ENCODE measurements at regions of chr3 and their contacts with region 1.

Region 1: DNA sequence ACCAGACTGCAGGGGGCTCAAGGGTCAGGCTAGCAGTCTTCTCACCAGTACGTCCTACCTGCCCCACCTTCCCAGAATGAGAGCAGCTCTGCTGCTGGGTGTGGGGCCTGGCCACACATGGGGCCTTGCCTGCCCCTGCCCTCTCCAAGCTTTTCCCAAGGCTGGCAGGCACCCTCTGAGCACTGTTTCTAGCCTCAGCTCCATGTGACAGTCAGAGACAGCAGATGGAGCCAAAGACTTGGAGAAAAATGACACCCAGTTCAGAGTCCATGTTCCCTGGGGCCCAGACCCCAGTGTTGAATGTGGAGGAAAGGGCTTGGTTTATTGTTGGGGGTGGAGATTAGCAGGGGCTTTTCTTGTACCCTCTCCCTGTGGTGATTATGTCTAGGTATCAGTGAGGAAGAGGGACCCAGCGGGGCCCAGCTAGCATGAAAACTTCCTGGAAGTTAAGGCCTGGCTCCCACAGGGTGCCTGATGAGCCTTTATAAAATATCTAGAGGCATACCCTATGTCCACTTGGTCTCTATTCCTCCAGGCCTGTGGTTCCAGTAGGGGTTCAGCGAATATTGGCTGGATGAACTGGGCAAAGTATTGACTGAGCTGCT is 153.8 kb downstream of the EEFSEC start:
- DNase-seq: peak; percentile 7
- ATAC-seq: peak; percentile 48
- H3K4me3 ChIP-seq: no peak overlapping the region
- H3K27ac ChIP-seq: no peak overlapping the region
- H3K4me1 ChIP-seq: no peaks in the 10 kb centered on the region
- H3K27me3 ChIP-seq: no peaks in the 10 kb centered on the region
- CTCF ChIP-seq: peak; percentile 37

Region 2: DNA sequence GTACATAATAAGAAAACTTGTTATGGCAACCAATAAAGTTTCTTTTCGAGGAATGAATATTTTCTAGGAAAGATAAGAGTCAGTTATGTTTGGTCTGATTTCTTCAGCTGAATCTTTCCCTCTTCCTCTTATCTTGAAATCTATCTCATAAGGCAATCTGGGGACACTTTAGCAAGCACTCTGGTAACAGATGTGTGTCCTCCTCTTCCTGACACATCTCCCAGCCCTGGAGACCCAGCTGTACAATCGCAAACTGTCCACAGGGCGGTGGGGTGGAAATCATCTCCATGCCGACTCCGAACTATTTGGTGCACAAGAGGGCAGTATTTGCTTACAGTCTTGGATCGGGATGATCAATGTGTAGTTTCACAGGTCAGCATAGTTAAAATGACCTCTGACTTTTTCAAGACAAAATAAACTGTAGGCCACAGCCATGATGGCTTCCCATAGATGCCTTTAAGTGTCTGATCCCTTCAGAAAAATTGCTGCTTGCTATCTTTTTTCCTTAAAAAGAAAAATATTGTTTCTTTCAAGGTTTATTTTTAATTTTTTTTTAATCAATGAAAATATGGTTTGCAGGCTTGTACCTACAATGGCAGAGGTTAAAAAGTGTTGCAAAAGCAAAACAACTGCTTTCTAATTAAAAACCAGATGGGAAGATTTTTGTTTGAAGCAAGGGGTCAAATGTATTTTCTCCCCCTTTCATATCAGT is 136.2 kb before region 1 on chr3:
- CTCF ChIA-PET with region 1: no interaction called
- POLR2A ChIA-PET with region 1: no interaction called
- intact Hi-C with region 1: loop called (anchors 10 kb)
- DNase-seq: peak; percentile 73
- ATAC-seq: peak; percentile 97
- H3K4me3 ChIP-seq: no peak overlapping the region
- H3K27ac ChIP-seq: no peak overlapping the region
- H3K4me1 ChIP-seq: no peaks in the 10 kb centered on the region
- H3K27me3 ChIP-seq: no peaks in the 10 kb centered on the region
- CTCF ChIP-seq: peak; percentile 79

Region 3: GRCh38 chr3:128278761-128279600 is 28.1 kb before region 1 on chr3:
- CTCF ChIA-PET with region 1: no interaction called
- POLR2A ChIA-PET with region 1: no interaction called
- intact Hi-C with region 1: no loop called
- DNase-seq: no peak
- ATAC-seq: no peak
- H3K4me3 ChIP-seq: no peak overlapping the region
- H3K27ac ChIP-seq: no peak overlapping the region
- H3K4me1 ChIP-seq: peaks cover 20% of the 10 kb centered on the region
- H3K27me3 ChIP-seq: no peaks in the 10 kb centered on the region
- CTCF ChIP-seq: no peak

Region 4: GRCh38 chr3:128426128-128426921 is 119.2 kb after region 1 on chr3:
- CTCF ChIA-PET with region 1: no interaction called
- POLR2A ChIA-PET with region 1: no interaction called
- intact Hi-C with region 1: loop called (anchors 10 kb)
- DNase-seq: peak; percentile 56
- ATAC-seq: peak; percentile 85
- H3K4me3 ChIP-seq: peak overlapping the region; percentile 47; the same call in 1 of the 2 replicates
- H3K27ac ChIP-seq: no peak overlapping the region
- H3K4me1 ChIP-seq: peaks cover 20% of the 10 kb centered on the region; the same call in 1 of the 2 replicates
- H3K27me3 ChIP-seq: no peaks in the 10 kb centered on the region
- CTCF ChIP-seq: peak; percentile 61